ENCODE measurements at regions of chr17 and their contacts with region 1.

Region 1: GRCh38 chr17:27733773-27734172 is 66.6 kb downstream of the NOS2 start:
- DNase-seq: no peak
- H3K4me3 ChIP-seq: no peak overlapping the region
- H3K27ac ChIP-seq: no peak overlapping the region
- H3K4me1 ChIP-seq: no peaks in the 10 kb centered on the region
- H3K27me3 ChIP-seq: peaks cover 18% of the 10 kb centered on the region
- CTCF ChIP-seq: no peak
- EP300 ChIP-seq: no peak
- POLR2A ChIP-seq: no peak

Region 2: DNA sequence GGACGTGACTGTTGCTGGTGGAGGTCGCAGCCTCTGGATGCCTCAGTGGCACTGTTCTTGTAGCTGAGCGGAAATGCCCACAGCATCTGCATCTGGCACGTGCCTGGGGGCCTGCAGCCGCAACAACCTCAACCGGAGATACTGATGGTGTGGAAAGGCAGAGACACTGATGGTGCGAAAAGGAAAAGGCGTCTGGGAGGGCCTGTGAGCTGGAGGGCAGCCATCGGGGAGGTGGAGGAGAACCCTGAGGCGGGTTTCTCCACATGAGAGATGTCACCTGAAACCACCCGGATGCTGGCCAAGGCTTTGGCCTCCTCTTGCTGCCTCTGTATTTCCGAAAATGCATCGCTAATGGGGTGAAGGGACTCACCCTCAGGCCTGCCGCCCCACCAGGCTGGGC is 724.7 kb before region 1 on chr17:
- in situ Hi-C with region 1: no loop called
- intact Hi-C with region 1: no loop called
- DNase-seq: no peak
- H3K4me3 ChIP-seq: no peak overlapping the region
- H3K27ac ChIP-seq: no peak overlapping the region
- H3K4me1 ChIP-seq: no peaks in the 10 kb centered on the region
- H3K27me3 ChIP-seq: no peaks in the 10 kb centered on the region
- CTCF ChIP-seq: no peak
- EP300 ChIP-seq: no peak
- POLR2A ChIP-seq: no peak

Region 3: GRCh38 chr17:27622986-27623385 is 110.8 kb before region 1 on chr17:
- in situ Hi-C with region 1: no loop called
- intact Hi-C with region 1: no loop called
- DNase-seq: no peak
- H3K4me3 ChIP-seq: no peak overlapping the region
- H3K27ac ChIP-seq: peak overlapping the region in 1 of 4 donors; percentile 11
- H3K4me1 ChIP-seq: peaks cover 0 to 16% (median 10%) of the 10 kb centered on the region in 4 donors
- H3K27me3 ChIP-seq: no peaks in the 10 kb centered on the region
- CTCF ChIP-seq: no peak
- EP300 ChIP-seq: no peak
- POLR2A ChIP-seq: no peak

Region 4: DNA sequence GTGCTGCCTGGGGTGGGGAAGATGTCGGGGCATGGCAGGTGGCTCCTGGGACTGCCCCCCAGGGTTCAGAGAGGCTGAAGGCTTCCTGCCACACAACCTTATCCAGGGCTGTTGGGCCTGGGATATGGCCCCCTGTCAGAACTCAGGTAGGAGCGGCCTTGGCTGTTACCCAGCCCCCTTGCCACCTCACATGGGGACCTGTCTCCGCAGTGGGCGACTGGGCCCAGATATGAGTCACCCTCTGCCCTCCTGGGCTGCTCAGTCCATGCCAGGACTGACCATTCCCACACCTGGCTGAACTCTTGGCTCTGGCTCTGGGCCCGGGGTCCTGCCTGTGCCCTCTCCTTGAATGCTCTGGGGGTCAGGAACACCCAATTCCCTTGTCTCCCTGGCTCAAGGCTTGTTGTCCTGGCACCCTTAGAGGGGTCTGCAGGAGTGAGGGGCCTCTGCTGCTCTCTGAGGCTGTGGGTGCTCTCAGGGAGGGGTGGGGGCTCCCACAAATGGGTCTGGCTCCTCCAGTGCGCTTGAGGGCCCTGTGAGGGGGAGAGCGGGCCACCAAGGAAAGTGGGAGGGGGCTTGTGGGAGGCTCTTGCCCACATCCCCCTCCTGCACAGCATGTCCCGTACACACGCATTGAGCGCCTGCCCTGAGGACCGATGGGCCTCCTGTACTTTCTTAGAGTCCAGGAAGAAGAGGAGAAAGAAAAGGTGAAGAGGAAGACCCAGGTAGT is 66.8 kb before region 1 on chr17:
- in situ Hi-C with region 1: loop called in 1 of 4 experiments (anchors 10 kb)
- intact Hi-C with region 1: no loop called
- DNase-seq: no peak
- H3K4me3 ChIP-seq: no peak overlapping the region
- H3K27ac ChIP-seq: no peak overlapping the region
- H3K4me1 ChIP-seq: no peaks in the 10 kb centered on the region
- H3K27me3 ChIP-seq: no peaks in the 10 kb centered on the region
- CTCF ChIP-seq: no peak
- EP300 ChIP-seq: no peak
- POLR2A ChIP-seq: no peak

Measured in transverse colon (tissue), 4 donors.